ENCODE measurements at regions of chr17 and their contacts with region 1.

Region 1: DNA sequence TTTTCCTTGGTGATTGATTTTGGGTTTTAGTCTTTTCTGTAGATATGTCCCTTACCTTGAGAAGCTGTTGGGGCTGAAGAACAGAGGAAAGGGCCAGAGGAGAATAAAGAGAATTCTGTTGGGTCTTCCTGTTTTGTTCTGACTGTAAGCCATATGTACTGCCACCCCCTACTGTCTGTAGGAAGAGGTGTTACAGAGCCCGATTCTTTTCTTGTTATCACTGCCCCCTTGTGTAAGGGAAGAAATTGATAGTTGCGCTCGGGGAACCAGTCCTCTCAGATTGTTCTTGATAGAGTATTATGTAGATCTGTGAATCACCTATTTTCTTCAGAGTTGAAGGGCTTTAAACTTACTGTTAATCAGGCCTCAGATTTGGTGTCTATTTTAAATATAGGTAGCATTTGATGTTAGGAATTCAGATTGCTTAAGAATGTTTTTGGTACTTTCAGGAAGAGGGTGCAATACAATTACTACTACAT is 2.4 kb downstream of the TANC2 start:
- DNase-seq: peak; percentile 90
- H3K4me3 ChIP-seq: no peak overlapping the region
- H3K27ac ChIP-seq: no peak overlapping the region
- H3K4me1 ChIP-seq: peaks cover 19% of the 10 kb centered on the region
- H3K27me3 ChIP-seq: no peaks in the 10 kb centered on the region
- CTCF ChIP-seq: peak; percentile 78 to 80
- POLR2A ChIP-seq: no peak

Region 2: DNA sequence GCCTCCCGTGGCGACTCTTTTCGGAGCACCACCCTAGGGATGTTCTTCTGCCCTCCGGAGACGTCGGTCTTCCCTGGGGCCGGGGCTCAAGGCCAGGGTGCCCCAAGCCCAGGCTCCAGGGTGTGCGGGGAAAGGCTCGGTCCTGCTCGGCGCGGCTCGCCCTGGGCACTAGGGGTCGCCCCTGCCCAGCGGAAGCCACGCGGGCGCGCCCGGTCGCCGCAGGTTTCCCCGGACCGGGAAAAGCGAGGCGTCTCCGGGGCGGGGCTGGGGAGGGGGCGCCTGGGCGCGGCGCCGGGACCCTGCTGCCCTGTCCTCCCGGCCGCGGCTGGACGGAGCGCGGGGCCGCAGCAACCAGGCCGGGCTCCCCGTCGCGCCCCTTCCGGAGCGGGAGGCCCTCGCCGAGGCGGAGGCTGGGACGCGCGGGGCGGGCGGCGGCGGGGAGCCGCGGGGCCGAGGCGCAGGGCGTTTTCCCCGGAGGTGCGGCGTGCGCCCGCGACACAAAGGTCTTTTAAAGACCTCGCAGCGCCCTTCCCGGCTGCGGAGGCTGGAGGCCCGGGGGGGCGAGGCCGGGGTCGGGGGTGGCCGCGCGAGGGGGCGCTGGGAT is 264.6 kb before region 1 on chr17:
- CTCF ChIA-PET with region 1: interaction called, 12 read pairs
- POLR2A ChIA-PET with region 1: no interaction called
- dilution Hi-C with region 1: no loop called
- intact Hi-C with region 1: loop called (anchors 1 kb)
- DNase-seq: peak; percentile 44
- H3K4me3 ChIP-seq: peak overlapping the region; percentile 23 to 56 (median 48)
- H3K27ac ChIP-seq: peak overlapping the region; percentile 14
- H3K4me1 ChIP-seq: peaks cover 32% of the 10 kb centered on the region
- H3K27me3 ChIP-seq: peaks cover 0 to 8% of the 10 kb centered on the region in 2 experiments
- CTCF ChIP-seq: peak; percentile 79 to 87
- POLR2A ChIP-seq: no peak

Region 3: GRCh38 chr17:62892870-62893338 is 75.6 kb before region 1 on chr17:
- CTCF ChIA-PET with region 1: no interaction called
- POLR2A ChIA-PET with region 1: no interaction called
- dilution Hi-C with region 1: no loop called
- intact Hi-C with region 1: loop called (anchors 2 kb)
- DNase-seq: peak; percentile 83
- H3K4me3 ChIP-seq: no peak overlapping the region
- H3K27ac ChIP-seq: peak overlapping the region; percentile 10
- H3K4me1 ChIP-seq: peaks cover 37% of the 10 kb centered on the region
- H3K27me3 ChIP-seq: no peaks in the 10 kb centered on the region
- CTCF ChIP-seq: no peak
- POLR2A ChIP-seq: no peak

Region 4: GRCh38 chr17:62919388-62919787 is 49.1 kb before region 1 on chr17:
- CTCF ChIA-PET with region 1: no interaction called
- POLR2A ChIA-PET with region 1: no interaction called
- dilution Hi-C with region 1: no loop called
- intact Hi-C with region 1: no loop called
- DNase-seq: peak; percentile 76
- H3K4me3 ChIP-seq: no peak overlapping the region
- H3K27ac ChIP-seq: no peak overlapping the region
- H3K4me1 ChIP-seq: peaks cover 9% of the 10 kb centered on the region
- H3K27me3 ChIP-seq: no peaks in the 10 kb centered on the region
- CTCF ChIP-seq: no peak
- POLR2A ChIP-seq: no peak

Region 5: GRCh38 chr17:62986567-62986966 is 18.1 kb after region 1 on chr17:
- CTCF ChIA-PET with region 1: no interaction called
- POLR2A ChIA-PET with region 1: no interaction called
- dilution Hi-C with region 1: no loop called
- intact Hi-C with region 1: no loop called
- DNase-seq: no peak
- H3K4me3 ChIP-seq: no peak overlapping the region
- H3K27ac ChIP-seq: no peak overlapping the region
- H3K4me1 ChIP-seq: peaks cover 7% of the 10 kb centered on the region
- H3K27me3 ChIP-seq: no peaks in the 10 kb centered on the region
- CTCF ChIP-seq: no peak
- POLR2A ChIP-seq: no peak